ENCODE measurements at regions of chr4 and their contacts with region 1.

Region 1: GRCh38 chr4:10018818-10019461 is 2.4 kb downstream of the SLC2A9 start:
- DNase-seq: peak; percentile 86
- H3K4me3 ChIP-seq: peak overlapping the region; percentile 13
- H3K27ac ChIP-seq: no peak overlapping the region
- H3K4me1 ChIP-seq: no peaks in the 10 kb centered on the region
- H3K27me3 ChIP-seq: no peaks in the 10 kb centered on the region
- CTCF ChIP-seq: peak; percentile 96

Region 2: DNA sequence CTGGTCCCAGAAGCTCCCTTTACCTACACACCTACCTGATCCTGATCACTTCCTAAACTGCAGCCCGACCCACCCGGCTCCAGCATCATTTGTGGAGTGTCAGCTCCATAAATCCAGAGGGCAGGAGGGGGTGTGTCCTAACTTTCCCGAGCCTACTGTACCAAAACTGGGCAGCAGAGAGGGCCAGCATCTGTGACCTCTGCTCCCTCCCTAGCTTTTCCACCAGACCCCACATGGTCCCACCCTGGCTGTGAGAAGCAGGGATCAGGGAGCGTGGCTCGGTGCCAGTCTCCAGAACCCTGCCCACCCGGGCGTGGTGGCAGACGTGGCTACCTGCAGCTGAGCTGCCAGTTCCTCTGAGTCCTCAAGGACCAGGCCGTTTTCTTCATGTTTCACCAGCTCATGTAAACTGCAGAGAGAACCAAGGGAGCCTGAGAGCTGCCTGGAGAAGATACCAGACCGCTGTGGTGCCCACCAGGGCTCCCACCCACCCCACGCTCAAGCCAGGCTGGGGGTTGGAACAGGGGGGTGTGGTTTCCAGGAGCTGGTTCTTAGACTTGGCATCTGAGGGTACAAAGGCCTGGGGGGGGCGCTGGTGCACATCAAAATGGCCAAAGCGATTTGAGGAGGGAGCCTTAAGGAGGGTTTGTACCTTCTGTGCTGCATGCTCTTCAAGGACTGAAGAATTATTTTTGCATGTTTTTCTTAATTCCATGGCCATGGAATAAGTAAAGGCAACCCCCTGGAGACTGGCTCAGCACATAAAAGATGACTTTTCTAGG is 314.2 kb before region 1 on chr4:
- CTCF ChIA-PET with region 1: interaction called, 6 read pairs
- POLR2A ChIA-PET with region 1: no interaction called
- intact Hi-C with region 1: loop called (anchors 5 kb)
- DNase-seq: no peak
- H3K4me3 ChIP-seq: no peak overlapping the region
- H3K27ac ChIP-seq: no peak overlapping the region
- H3K4me1 ChIP-seq: no peaks in the 10 kb centered on the region
- H3K27me3 ChIP-seq: no peaks in the 10 kb centered on the region
- CTCF ChIP-seq: no peak

Measured in A673 (cell line).